ENCODE measurements at regions of chr5 and their contacts with region 1.

Region 1: DNA sequence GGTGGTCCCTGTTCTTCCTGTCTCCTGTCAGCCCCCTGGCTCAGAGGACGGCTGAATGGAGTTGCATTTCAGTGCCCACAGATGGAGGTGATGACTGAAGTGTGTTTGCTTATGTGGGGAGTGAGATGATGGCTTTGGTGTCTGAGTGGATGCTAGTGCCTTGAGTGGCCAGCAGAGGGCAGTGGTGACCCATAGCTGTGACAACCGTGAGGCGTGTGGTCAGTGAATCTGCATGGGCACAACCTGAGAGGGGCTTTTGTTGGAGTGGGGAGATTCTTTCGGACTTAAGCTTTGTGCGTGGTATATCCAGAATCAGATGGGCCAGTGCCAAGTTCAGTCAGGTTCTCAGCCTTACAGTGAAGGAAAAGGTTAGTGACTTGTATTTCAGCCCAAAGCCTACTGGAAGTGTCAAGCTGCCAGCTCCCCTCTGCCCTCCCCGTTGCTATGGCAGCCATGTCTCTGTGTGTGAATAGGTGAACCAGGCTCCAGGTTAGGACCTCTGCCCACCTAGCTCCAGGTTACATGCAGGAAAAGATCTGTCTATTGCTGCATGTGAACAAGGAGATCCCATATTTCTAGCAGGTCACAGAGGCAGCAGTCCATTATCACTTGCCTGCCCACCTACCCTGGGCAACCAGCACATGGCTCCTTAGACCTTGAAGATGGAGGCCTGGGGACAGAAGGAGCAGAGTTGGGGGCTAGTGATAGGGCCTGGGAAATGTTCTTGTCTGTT is 14.7 kb upstream of the CXXC5 start:
- DNase-seq: peak; percentile 77
- H3K4me3 ChIP-seq: no peak overlapping the region; a peak in 1 of 4 replicates
- H3K27ac ChIP-seq: peak overlapping the region in 1 of 2 experiments; percentile 12; a peak in 1 of 4 replicates
- H3K4me1 ChIP-seq: peaks cover 29 to 43% of the 10 kb centered on the region in 2 experiments
- H3K27me3 ChIP-seq: no peaks in the 10 kb centered on the region
- CTCF ChIP-seq: peak; percentile 98
- EP300 ChIP-seq: no peak
- RAD21 ChIP-seq: peak; percentile 97

Region 2: DNA sequence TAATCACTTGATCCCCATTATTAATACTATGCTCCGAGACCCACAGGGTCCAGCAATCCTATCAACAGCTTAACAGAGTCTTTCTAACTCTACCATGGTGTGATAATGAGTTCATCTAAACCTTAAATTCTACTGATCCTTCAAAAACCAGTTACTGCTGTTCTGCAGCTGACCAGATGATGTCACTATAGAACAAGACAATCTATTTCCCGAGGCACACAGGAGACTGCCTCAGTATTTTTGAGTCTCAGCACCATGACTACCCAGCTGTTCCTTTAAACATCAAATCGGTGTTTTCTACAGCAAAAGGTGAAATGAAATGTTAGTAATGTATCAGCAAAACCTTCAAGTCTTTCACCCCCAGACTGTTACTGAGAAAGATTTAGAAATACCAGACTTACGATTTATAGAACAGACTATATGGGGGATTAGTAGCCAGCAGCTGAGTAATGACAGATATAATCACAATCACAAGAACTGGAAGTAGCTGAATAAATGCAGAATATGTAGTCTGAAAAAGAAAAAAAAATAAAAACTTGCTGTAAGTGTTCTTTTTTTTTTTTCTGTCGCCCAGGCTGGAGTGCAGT is 211.1 kb before region 1 on chr5:
- CTCF ChIA-PET with region 1: interaction called, 12 read pairs
- POLR2A ChIA-PET with region 1: no interaction called
- DNase-seq: peak; percentile 74
- H3K4me3 ChIP-seq: peak overlapping the region in 1 of 2 experiments; percentile 4; a peak in 1 of 4 replicates
- H3K27ac ChIP-seq: peak overlapping the region in 1 of 2 experiments; percentile 42; a peak in 1 of 4 replicates
- H3K4me1 ChIP-seq: peaks cover 8 to 9% of the 10 kb centered on the region in 2 experiments; a peak in 3 of 4 replicates
- H3K27me3 ChIP-seq: no peaks in the 10 kb centered on the region
- CTCF ChIP-seq: peak; percentile 96
- EP300 ChIP-seq: no peak
- RAD21 ChIP-seq: peak; percentile 97

Region 3: DNA sequence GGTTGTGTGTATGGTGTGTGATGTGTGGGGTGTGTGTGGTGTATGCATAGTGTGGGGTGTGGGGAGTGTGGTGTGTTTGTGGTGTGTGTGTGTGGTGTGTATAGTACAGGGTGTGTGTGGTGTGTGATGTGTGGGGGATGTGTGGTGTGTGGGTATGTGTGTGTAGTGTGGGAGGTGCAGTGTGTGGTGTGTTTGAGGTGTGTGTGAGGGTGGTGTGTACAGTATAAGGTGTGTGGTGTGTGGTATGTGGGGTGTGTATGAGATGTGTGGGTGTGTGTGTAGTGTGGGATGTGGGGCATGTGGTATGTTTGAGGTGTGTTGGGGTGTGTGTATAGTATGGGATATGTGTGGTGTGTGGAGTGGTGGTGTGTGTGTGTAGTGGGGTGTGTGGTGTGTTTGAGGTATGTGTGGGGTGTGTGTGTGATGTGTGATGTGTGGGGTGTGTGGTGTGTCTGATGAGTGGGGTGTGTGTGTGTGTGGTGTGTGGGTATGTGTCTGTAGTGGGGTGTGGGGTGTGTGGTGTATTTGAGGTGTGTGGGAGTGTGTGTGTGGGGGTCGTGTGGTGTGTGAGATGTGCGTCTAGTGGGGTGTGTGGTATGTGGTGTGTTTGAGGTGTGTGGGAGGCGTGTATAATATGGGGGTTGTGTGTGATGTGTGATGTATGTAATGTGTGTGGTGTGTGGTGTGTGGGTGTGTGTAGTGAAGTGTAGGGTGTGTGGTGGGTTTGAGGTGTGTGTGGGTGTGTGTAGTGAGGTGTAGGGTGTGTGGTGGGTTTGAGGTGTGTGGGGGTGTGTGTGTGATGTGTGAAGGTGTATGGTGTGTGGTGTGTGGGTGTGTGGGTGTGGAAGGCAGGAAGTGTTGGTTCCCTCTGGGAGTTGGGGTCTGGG is 179.5 kb before region 1 on chr5:
- CTCF ChIA-PET with region 1: no interaction called
- POLR2A ChIA-PET with region 1: no interaction called
- DNase-seq: no peak
- H3K4me3 ChIP-seq: no peak overlapping the region
- H3K27ac ChIP-seq: no peak overlapping the region
- H3K4me1 ChIP-seq: peaks cover 0 to under 1% of the 10 kb centered on the region in 2 experiments; a peak in 2 of 4 replicates
- H3K27me3 ChIP-seq: no peaks in the 10 kb centered on the region
- CTCF ChIP-seq: no peak
- EP300 ChIP-seq: no peak
- RAD21 ChIP-seq: no peak

Region 4: DNA sequence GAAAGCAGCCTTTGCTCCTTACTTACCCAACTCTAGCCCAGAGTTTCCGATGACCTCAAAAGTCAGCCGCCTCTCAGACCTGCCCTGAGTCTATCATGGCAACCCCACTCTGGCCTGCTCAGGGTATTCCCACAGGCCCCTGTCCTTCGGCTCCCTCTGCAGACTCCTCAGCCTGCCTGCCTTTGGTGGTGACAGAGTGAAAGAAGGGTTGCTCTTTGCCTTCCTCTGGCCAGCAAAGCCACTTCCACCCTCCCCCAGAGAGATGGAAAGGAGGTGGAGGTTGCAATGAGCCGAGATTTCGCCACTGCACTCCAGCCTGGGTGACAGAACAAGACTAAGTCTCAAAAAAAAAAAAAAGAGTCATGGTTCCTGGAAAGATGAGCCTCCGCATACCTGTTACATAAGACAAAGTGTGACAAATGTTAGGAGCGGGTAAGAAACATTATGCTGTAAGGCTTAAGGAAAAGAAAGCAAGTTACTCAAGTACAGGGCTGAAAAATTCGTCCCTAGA is 165.0 kb before region 1 on chr5:
- CTCF ChIA-PET with region 1: no interaction called
- POLR2A ChIA-PET with region 1: no interaction called
- DNase-seq: no peak
- H3K4me3 ChIP-seq: no peak overlapping the region
- H3K27ac ChIP-seq: no peak overlapping the region
- H3K4me1 ChIP-seq: peaks cover 0 to 2% of the 10 kb centered on the region in 2 experiments; a peak in 1 of 4 replicates
- H3K27me3 ChIP-seq: no peaks in the 10 kb centered on the region
- CTCF ChIP-seq: peak; percentile 26; the same call in 1 of the 2 replicates
- EP300 ChIP-seq: no peak
- RAD21 ChIP-seq: peak; percentile 27; the same call in 1 of the 2 replicates

Region 5: DNA sequence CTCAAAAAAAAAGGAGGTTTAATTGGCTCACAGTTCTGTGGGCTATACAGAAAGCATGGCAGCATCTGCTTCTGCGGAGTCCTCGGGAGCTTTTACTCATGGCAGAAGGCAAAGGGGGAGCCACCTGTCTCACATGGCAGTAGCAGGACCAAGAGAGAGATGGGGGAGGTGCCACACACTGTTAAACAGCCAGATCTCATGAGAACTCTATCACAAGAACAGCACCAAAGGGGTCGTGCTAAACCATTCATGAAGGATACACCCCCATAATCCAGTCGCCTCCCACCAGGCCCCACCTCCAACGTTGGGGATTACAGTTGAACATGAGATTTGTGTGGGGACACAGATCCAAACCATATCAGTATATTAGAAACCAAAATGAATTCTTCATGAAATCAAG is 13.6 kb before region 1 on chr5:
- CTCF ChIA-PET with region 1: interaction called, 11 read pairs
- POLR2A ChIA-PET with region 1: no interaction called
- DNase-seq: no peak
- H3K4me3 ChIP-seq: no peak overlapping the region
- H3K27ac ChIP-seq: no peak overlapping the region
- H3K4me1 ChIP-seq: no peaks in the 10 kb centered on the region
- H3K27me3 ChIP-seq: no peaks in the 10 kb centered on the region
- CTCF ChIP-seq: no peak
- EP300 ChIP-seq: no peak
- RAD21 ChIP-seq: no peak

Region 6: GRCh38 chr5:139670369-139671095 is 37.1 kb after region 1 on chr5:
- CTCF ChIA-PET with region 1: interaction called, 177 read pairs
- POLR2A ChIA-PET with region 1: interaction called, 9 read pairs
- DNase-seq: peak; percentile 59
- H3K4me3 ChIP-seq: no peak overlapping the region
- H3K27ac ChIP-seq: peak overlapping the region; percentile 26 to 99; a peak in 3 of 4 replicates
- H3K4me1 ChIP-seq: peaks cover 56 to 92% of the 10 kb centered on the region in 2 experiments
- H3K27me3 ChIP-seq: no peaks in the 10 kb centered on the region
- CTCF ChIP-seq: peak; percentile 43
- EP300 ChIP-seq: no peak
- RAD21 ChIP-seq: peak; percentile 32; the same call in 1 of the 2 replicates

Region 7: GRCh38 chr5:139696894-139697658 is 63.6 kb after region 1 on chr5:
- CTCF ChIA-PET with region 1: interaction called, 310 read pairs
- POLR2A ChIA-PET with region 1: interaction called, 3 read pairs
- DNase-seq: peak; percentile 82
- H3K4me3 ChIP-seq: peak overlapping the region in 1 of 2 experiments; percentile 30; a peak in 2 of 4 replicates
- H3K27ac ChIP-seq: peak overlapping the region; percentile 87 to 97
- H3K4me1 ChIP-seq: peaks cover 41 to 58% of the 10 kb centered on the region in 2 experiments; a peak in 3 of 4 replicates
- H3K27me3 ChIP-seq: no peaks in the 10 kb centered on the region
- CTCF ChIP-seq: no peak
- EP300 ChIP-seq: peak in 1 of 2 experiments; percentile 84; a peak in 1 of 4 replicates
- RAD21 ChIP-seq: no peak

Region 8: DNA sequence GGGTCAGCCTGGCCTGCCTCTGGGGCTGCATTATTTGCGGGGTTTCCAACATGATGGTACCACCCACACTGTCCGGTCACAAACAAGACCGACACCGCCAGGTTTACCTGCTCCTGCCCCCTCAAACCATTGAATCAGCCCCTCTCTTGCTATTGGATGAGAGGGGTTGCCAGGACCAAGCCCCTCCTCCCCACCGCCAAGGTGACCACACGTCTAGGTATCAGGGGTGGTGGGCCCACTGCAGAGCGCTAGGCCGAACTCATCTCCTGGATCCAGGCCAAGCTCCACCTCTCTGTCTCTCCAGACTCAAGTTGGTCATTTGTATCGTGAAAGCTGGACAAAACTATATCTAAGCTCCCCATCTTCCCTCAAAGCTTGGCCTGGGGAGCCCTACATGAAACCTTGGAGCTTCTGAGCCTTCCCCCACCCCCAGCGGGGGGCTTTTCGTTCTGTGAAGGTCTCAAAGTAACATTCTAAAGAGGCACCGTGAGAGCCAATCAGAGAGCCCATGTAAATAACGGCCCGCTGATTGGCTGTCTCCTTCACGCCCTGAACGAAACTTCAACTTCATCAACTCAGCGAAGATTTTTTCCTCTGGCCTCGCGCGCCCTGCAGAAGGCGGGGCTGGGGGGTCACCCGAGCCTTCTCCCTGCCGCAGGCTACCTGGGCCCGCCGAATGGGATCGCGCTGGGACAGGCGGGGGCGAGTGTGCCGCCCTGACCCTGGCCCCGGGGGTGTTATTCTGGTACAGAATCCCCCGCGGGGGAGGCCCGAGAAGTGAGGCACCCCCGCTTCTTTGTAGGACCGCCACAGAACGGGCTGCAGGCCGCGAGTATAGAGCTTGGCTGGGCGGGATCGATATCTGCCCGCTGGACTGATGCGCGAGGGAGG is 112.6 kb after region 1 on chr5:
- CTCF ChIA-PET with region 1: interaction called, 13 read pairs
- POLR2A ChIA-PET with region 1: interaction called, 6 read pairs
- DNase-seq: peak; percentile 85
- H3K4me3 ChIP-seq: peak overlapping the region; percentile 33 to 54
- H3K27ac ChIP-seq: peak overlapping the region in 1 of 2 experiments; percentile 69; a peak in 2 of 4 replicates
- H3K4me1 ChIP-seq: peaks cover 29 to 33% of the 10 kb centered on the region in 2 experiments; a peak in 3 of 4 replicates
- H3K27me3 ChIP-seq: no peaks in the 10 kb centered on the region
- CTCF ChIP-seq: no peak
- EP300 ChIP-seq: no peak
- RAD21 ChIP-seq: no peak

Region 9: DNA sequence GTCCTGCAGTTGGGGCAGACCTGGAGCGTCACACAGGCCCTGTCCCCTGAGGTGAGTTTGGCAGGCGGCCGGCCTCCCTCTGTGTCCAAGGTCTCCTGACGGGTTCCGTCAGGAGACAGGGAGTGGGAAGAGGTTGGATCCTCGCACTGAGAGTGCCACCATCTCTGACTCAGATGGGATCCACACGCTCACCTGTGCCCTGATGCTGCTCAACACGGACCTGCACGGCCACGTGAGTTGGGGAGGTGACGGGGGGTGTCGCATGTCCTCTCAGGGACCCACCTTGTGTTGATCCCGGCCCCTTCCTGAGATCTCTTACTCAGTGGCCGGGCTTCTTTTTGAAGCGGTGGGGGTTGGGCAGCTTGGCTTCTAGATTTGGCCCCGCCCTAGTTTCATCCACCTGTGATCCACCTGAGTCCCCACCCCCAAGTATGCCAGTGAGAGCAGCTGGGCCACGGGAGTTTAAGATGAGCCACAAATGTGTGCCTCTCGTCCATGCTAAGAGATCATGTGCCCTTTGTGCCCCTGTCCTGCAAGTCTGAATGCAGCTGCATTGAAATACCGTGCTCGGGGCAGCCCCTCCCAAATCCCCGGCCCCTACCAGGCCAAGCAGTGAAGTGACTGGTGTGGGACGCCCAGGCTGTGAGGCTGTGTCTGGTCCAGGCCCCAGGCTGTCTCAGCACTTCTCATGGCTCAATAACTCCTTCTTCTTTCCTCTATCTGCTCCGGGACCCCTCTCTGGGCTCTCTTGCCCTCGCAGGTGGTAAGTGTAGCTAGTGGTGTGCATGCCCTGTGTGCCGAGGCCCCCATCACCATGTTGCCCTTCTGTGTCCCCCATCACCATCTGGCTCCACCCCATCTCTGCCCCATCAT is 189.3 kb after region 1 on chr5:
- CTCF ChIA-PET with region 1: no interaction called
- POLR2A ChIA-PET with region 1: no interaction called
- DNase-seq: no peak
- H3K4me3 ChIP-seq: no peak overlapping the region
- H3K27ac ChIP-seq: no peak overlapping the region
- H3K4me1 ChIP-seq: no peaks in the 10 kb centered on the region
- H3K27me3 ChIP-seq: 0 out of 2 replicates have a peak, but pooled peaks cover 5% of the 10 kb centered on the region
- CTCF ChIP-seq: no peak
- EP300 ChIP-seq: no peak
- RAD21 ChIP-seq: no peak